ENCODE measurements at regions of chrX and their contacts with region 1.

Region 1: GRCh38 chrX:71254092-71254941 is at the start of gene ZMYM3:
- DNase-seq: peak; percentile 87
- ATAC-seq: peak; percentile 86
- H3K4me3 Mint-ChIP-seq: peak within 1 kb of the TSS; percentile 84
- H3K27ac Mint-ChIP-seq: peak within 1 kb of the TSS; percentile 83
- H3K4me1 Mint-ChIP-seq: peaks cover 29% of the 10 kb centered on the region
- H3K27me3 Mint-ChIP-seq: no peaks in the 10 kb centered on the region
- total RNA-seq, gene ZMYM3: 22.6 to 22.8 TPM

Region 2: GRCh38 chrX:71198066-71198465 is 56.3 kb before region 1 on chrX:
- CTCF ChIA-PET with region 1: no interaction called
- POLR2A ChIA-PET with region 1: no interaction called
- intact Hi-C with region 1: loop called (anchors 2 to 5 kb)
- DNase-seq: no peak
- ATAC-seq: peak; percentile 53
- H3K4me3 Mint-ChIP-seq: peak overlapping the region; percentile 76
- H3K27ac Mint-ChIP-seq: peak overlapping the region; percentile 86
- H3K4me1 Mint-ChIP-seq: peaks cover 17% of the 10 kb centered on the region
- H3K27me3 Mint-ChIP-seq: no peaks in the 10 kb centered on the region

Measured in activated CD4-positive, alpha-beta T cell treated with anti-CD3 and anti-CD28 coated beads for 36 hours (primary cell).